ENCODE measurements at regions of chr6 and their contacts with region 1.

Region 1: GRCh38 chr6:53492860-53493634 is 51.9 kb downstream of the GCLC start:
- DNase-seq: peak; percentile 44
- H3K27ac ChIP-seq: peak overlapping the region; percentile 65
- CTCF ChIP-seq: peak; percentile 84

Region 2: DNA sequence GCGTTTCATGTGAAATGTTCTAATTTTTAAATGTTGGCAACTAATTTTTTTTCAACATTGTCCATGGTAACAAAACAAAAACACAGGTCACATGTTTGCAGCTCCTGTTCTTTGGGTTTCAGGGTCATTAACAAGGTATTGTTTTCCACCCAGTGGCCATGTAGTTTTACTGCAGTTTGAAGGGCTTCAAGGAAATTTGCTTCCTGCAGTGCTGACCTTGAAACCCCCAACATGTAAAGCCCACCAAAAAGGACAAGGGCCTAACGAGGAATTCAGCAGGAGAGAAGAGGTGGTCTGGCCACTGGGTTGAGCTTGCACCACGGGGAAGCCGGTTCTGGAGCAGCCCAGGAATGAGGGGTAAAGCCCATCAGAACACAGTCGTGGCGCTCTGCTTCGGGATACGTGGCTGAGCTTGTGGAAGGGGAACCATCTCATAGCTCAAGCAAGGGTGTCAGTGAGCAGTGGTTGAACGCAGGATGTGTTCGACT is 186.4 kb after region 1 on chr6:
- CTCF ChIA-PET with region 1: interaction called, 12 read pairs
- POLR2A ChIA-PET with region 1: no interaction called
- DNase-seq: peak; percentile 69
- H3K27ac ChIP-seq: no peak overlapping the region
- CTCF ChIP-seq: peak; percentile 51

Region 3: GRCh38 chr6:53725791-53726431 is 232.9 kb after region 1 on chr6:
- CTCF ChIA-PET with region 1: interaction called, 10 read pairs
- POLR2A ChIA-PET with region 1: no interaction called
- DNase-seq: peak; percentile 71
- H3K27ac ChIP-seq: no peak overlapping the region
- CTCF ChIP-seq: peak; percentile 94

Measured in RWPE1 (cell line).